Esophagus squamous epithelium (tissue), 5 donors: ENCODE measurements at regions of chr4 and their contacts with region 1.

Region 1: DNA sequence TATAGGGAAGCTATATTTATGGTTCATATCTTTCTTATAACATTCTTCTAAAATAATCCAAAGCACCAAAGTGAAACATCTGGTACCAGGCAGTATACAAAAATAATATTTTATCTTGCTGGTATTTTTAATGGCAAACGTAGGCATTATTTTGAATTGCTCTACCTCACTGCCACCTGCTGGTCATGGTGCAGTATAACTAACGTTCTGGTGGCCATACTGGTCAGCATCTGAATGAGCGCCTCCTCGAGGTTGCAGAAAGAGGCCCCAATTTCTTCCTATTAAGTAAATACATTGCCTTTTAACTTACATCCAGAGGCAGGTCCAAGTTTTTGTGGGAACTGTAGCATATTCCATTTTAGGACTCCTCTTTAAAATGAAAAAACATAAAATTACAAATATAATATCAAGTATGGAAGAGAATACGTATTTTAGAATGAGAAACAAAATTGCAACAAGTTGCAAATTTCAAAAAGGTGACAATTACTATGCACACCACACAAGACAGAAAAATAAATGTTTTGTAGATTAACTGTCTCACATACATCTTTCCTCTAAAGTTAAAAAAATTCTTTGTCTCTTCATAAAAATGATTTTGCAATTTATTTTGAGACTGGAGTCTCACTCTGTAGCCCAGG is 22.9 kb upstream of the CWH43 start:
- DNase-seq: no peak
- H3K4me3 ChIP-seq: no peak overlapping the region
- H3K27ac ChIP-seq: no peak overlapping the region
- H3K4me1 ChIP-seq: peaks cover 0 to 38% (median 3%) of the 10 kb centered on the region in 3 donors
- H3K27me3 ChIP-seq: no peaks in the 10 kb centered on the region
- CTCF ChIP-seq: peak; percentile 88 to 98 (median 96)
- POLR2A ChIP-seq: no peak

Region 2: GRCh38 chr4:48578132-48578968 is 384.8 kb before region 1 on chr4:
- intact Hi-C with region 1: loop called (anchors 5 kb)
- DNase-seq: no peak
- H3K4me3 ChIP-seq: no peak overlapping the region
- H3K27ac ChIP-seq: no peak overlapping the region
- H3K4me1 ChIP-seq: no peaks in the 10 kb centered on the region
- H3K27me3 ChIP-seq: no peaks in the 10 kb centered on the region
- CTCF ChIP-seq: peak; percentile 83 to 92 (median 88)
- POLR2A ChIP-seq: no peak

Region 3: GRCh38 chr4:48698029-48698971 is 264.9 kb before region 1 on chr4:
- intact Hi-C with region 1: no loop called
- DNase-seq: no peak
- H3K4me3 ChIP-seq: no peak overlapping the region
- H3K27ac ChIP-seq: peak overlapping the region in 1 of 4 donors; percentile 7
- H3K4me1 ChIP-seq: peaks cover 0 to 32% (median 22%) of the 10 kb centered on the region in 3 donors
- H3K27me3 ChIP-seq: no peaks in the 10 kb centered on the region
- CTCF ChIP-seq: no peak
- POLR2A ChIP-seq: no peak

Region 4: GRCh38 chr4:48766131-48766792 is 196.9 kb before region 1 on chr4:
- intact Hi-C with region 1: no loop called
- DNase-seq: no peak
- H3K4me3 ChIP-seq: no peak overlapping the region
- H3K27ac ChIP-seq: no peak overlapping the region
- H3K4me1 ChIP-seq: peaks cover 0 to 31% (median 0%) of the 10 kb centered on the region in 3 donors
- H3K27me3 ChIP-seq: no peaks in the 10 kb centered on the region
- CTCF ChIP-seq: no peak
- POLR2A ChIP-seq: no peak

Region 5: GRCh38 chr4:48779998-48780742 is 183.0 kb before region 1 on chr4 and contains the start of gene FRYL:
- intact Hi-C with region 1: loop called (anchors 5 kb)
- DNase-seq: peak; percentile 99
- H3K4me3 ChIP-seq: peak within 1 kb of the TSS; percentile 92 to 99 (median 96)
- H3K27ac ChIP-seq: peak within 1 kb of the TSS; percentile 95 to 99 (median 99)
- H3K4me1 ChIP-seq: peaks cover 12 to 45% (median 30%) of the 10 kb centered on the region in 3 donors
- H3K27me3 ChIP-seq: no peaks in the 10 kb centered on the region
- CTCF ChIP-seq: no peak
- POLR2A ChIP-seq: peak in 2 of 4 donors; percentile 52 to 65
- total RNA-seq, gene FRYL: 26.1 to 69.6 (median 38.1) TPM